AG04449 (cell line): ENCODE measurements at regions of chr11 and their contacts with region 1.

Region 1: DNA sequence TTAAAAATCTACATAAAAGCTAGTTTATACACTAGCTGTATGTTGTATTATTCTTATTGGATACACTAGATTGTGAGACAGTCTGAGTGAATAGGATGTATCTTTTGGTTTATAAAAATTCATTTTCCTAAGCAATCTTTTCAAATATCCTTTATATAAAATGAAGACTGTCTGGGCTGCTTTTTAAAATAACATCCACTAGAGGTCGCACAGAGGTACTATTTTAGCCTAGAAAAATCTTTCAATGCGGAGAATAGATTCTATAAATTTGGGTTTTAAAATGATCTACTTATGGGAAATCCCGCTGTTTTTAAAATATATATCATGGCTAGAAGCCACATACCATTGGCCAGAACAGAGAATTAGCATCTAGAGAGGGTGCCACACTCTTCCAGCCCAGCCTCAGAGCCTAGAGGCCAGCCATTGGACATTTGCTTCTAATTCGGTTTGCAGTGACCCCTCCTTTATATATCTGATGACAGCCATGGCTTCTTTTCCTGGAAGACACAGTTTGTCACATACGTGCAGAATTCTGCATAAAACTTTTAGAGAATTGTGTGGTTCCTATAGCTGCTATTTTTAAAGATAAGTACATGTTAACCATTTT is 7.3 kb downstream of the C11orf97 start:
- DNase-seq: no peak
- H3K4me3 ChIP-seq: no peak overlapping the region
- CTCF ChIP-seq: peak; percentile 10

Region 2: DNA sequence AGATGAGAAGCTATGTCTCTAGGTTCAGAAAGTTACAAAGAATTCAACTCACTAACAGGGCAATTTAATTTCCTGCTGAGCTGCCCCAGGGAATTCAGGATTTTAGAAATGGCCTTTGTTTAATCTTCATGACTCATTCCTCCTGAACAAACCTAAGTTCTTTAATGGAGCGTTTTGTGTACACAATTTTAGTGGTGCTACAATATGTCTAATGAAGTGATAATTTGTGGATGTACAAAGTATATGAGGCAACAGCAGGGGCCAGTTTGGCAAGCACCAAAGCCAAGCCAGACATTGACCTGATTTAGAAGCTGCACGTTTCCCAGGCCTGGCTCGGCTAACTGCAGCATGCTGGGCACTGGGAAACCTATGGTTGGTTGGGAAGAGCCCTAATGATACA is 532.9 kb before region 1 on chr11:
- CTCF ChIA-PET with region 1: no interaction called
- POLR2A ChIA-PET with region 1: no interaction called
- DNase-seq: no peak
- H3K4me3 ChIP-seq: no peak overlapping the region
- CTCF ChIP-seq: no peak

Region 3: DNA sequence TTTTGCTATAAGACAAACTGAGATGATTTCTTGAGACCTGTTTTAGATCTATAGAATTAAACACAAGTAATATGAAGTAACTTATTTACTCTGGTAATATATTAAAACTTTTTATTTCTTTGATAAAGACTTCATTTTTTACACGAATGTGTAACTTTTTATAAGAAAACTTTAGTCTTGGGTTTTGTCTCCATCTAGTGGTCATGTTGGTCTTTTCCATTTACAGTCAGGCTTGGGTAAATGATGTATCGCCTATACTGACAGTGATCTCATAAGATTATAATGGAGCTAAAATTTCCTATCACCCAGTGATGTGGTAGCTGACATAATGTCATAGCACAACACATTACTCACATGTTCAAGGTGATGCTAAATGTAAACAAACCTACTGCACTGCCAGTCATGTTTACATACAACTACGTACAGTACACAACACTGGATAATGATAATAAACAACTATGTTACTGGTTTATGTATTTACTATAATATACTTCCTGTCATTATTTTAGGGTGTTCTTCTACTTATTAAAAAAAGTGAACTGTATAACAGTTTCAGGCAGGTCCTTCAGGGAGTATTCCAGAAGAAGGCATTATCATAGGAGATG is 14.8 kb before region 1 on chr11:
- CTCF ChIA-PET with region 1: interaction called, 22 read pairs
- POLR2A ChIA-PET with region 1: no interaction called
- DNase-seq: no peak
- H3K4me3 ChIP-seq: no peak overlapping the region
- CTCF ChIP-seq: peak; percentile 26

Region 4: GRCh38 chr11:94543695-94544645 is 24.4 kb after region 1 on chr11 and contains the start of gene FUT4:
- CTCF ChIA-PET with region 1: interaction called, 11 read pairs
- POLR2A ChIA-PET with region 1: no interaction called
- DNase-seq: no peak
- H3K4me3 ChIP-seq: peak within 1 kb of the TSS; percentile 63
- CTCF ChIP-seq: peak; percentile 22

Region 5: DNA sequence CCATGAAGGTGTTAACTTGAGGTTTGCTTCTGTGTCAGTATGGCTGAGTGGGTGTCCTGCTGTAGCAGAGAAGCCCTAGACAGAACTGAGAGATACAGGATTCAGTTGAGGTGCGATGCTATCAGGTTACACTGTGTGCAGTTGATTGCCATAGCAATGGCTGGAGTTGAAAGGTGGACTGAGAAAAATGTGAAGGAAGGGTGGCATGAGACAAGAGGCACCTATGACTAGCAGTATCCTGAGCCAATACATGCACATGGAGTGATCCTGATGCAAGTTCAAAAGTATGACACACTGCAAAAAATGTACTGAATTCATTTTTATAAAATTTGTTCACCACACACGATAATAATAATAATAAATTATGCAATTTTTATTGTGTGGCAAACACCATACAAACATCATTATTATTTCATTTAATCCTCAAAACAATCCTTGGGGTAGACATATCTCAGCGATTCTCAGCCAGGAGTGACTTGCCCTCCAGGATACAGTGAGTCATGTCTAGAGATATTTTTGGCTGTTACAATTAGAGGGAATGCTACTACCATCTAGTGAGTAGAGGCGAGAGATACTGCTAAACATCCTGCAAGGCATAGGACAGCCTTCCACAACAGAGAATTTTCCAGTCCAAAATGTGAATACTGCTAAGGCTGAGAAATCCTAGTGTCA is 43.7 kb after region 1 on chr11:
- CTCF ChIA-PET with region 1: interaction called, 40 read pairs
- POLR2A ChIA-PET with region 1: no interaction called
- DNase-seq: no peak
- H3K4me3 ChIP-seq: no peak overlapping the region
- CTCF ChIP-seq: peak; percentile 31

Region 6: GRCh38 chr11:94602430-94603372 is 83.1 kb after region 1 on chr11:
- CTCF ChIA-PET with region 1: interaction called, 270 read pairs
- POLR2A ChIA-PET with region 1: no interaction called
- DNase-seq: peak; percentile 45
- H3K4me3 ChIP-seq: no peak overlapping the region
- CTCF ChIP-seq: peak; percentile 58